ENCODE measurements at regions of chr1 and their contacts with region 1.

Region 1: DNA sequence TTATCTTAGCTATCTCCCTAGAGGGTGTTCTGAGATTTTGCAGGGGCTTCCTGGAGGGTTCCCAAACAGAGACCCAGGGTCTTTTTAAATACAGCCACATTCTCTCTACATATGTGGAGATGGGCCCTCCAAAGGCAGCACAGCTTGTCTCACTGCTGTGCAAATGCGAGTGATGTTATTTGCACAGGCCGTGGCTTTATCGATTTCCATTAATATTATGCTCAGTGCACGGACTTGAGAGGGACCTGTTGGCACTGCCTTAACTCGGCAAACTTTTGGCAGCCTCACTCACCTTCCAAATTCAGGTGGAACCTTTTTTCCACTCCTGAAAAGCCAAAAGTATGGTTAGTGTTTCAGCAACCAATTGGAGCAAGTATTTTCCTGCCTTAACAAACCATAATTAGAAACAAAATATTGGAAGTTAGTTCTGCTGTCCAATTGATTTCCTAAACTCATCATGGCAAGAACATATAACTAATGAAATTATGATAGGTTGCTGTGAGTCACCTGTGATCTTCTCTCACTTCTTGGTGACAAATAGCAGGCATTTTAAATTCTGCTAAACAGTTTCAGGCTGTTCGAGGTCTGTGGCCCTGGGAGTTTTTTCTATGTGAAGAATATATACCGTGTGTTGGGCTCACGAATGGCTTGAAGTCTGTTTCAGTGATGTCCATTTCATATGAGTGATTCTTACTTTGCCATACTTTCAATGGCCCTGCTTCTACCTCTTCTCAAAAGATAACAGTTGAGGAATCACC is 10.9 kb downstream of the LHX9 start:
- DNase-seq: no peak
- H3K27ac ChIP-seq: no peak overlapping the region
- CTCF ChIP-seq: no peak

Region 2: DNA sequence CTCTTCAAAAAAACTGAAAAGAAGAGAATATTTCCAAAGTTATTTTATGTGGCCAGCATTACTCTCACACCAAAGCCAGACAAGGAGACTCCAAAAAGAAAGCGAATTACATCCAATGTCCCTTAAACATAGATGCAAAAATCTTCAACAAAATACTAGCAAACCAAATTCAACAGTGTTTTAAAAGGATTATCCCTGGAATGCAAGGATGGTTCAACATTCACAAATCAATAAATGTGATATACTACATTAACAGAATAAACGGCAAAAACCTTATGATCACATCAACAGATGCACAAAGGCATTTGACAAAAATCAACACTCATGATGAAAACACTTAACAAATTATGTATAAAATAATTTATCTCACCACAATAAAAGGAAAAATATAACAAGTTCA is 360.6 kb before region 1 on chr1:
- CTCF ChIA-PET with region 1: no interaction called
- POLR2A ChIA-PET with region 1: no interaction called
- DNase-seq: no peak
- H3K27ac ChIP-seq: no peak overlapping the region
- CTCF ChIP-seq: no peak

Region 3: DNA sequence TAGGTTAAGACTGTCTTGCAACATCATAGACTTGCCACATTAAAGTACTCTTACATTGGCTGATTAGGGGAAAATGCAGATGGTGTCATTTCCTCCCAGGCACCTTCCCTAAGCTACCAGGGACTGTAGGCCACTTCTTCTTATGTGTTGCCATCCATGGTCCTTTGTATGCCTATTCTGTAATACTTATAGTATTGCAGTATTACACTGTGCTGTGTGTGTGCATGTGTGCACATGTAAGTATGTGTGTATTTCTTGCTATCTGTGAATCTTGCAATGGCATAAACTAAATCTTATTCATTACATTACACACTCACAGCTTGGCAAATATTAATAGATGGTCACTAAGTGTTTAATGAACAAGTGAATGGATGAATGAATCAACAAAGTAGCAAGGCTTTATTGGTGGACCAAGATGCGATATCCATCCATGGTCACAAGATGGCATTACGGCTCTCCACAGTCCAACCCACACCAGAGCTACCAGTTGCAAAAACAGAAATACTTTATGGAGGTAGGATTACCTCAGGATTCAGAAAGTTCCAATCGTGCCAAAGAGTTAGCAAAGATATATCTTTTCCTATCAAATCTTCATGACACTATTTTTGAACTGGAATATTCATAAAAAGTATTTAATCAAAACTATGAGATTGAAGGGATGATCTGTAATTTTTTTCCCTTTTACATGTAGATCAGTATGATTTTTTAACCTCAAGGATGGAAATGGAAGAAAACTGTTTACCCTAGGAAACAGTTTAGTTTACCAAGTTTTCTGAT is 313.0 kb before region 1 on chr1:
- CTCF ChIA-PET with region 1: interaction called, 16 read pairs
- POLR2A ChIA-PET with region 1: no interaction called
- DNase-seq: peak; percentile 31
- H3K27ac ChIP-seq: no peak overlapping the region
- CTCF ChIP-seq: peak; percentile 73

Region 4: DNA sequence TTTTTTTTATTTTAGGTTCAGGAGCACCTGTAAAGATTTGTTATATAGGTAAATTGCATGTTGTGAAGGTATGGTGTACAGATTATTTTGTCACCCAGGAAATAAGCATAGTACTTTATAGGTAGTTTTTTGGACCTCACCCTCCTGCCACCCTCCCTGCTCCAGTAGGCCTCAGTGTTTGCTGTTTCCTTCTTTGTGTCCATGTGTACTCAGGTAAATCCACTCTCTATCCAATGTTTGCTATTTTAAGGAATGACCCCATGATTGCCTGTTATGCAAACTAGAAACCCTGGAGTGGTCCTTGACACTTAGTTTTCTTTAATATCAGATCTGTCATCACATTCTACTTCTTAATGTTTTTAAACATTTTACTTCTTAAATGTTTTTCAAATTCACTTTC is 23.0 kb after region 1 on chr1:
- CTCF ChIA-PET with region 1: no interaction called
- POLR2A ChIA-PET with region 1: no interaction called
- DNase-seq: no peak
- H3K27ac ChIP-seq: no peak overlapping the region
- CTCF ChIP-seq: no peak

Measured in RWPE1 (cell line).